ENCODE measurements at regions of chr4 and their contacts with region 1.

Region 1: GRCh38 chr4:99405433-99406115 is 29.6 kb downstream of the ADH7 start:
- DNase-seq: no peak

Region 2: DNA sequence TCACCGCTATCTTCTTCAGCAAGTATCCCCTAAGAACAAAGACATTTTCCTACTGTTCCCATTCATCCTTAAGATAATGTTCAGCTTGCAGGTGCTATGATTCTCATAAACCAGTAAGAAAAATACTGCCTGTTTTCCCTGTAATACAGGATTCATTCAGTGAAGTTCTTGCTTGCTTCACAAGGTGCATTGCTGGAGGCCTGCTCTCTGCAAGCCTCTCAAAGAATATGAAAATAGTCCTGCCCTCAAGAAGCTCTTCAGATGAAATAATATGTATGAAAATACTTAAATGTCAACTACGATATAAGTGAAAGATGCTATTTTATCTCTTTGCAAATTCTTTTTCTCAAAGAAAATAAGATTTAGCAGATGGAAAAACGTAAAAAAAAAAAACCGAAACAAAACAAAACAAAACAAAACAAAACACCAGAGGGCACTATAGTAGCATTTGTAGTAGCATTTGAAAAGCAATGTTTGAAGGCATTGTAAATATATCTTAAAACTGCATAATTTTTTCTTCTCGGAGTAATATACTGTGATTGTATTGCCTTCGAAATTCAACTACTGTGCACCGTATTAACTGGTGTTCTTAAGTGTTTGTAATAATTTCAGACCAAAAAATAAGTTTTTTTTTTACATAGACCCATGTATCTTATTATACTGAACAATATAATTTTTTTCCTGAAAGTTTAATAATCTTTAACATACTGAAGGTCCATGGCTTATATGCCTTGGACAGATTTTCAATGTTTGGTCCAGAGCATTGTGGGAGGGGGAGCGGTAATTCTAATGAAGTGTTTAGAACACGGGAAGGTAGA is 287.5 kb before region 1 on chr4:
- intact Hi-C with region 1: loop called (anchors 5 to 10 kb)
- DNase-seq: no peak